ENCODE measurements at regions of chr14 and their contacts with region 1.

Region 1: GRCh38 chr14:59428581-59429012 is 36.6 kb downstream of the GPR135 start:
- DNase-seq: peak; percentile 43
- H3K4me3 ChIP-seq: no peak overlapping the region
- H3K27ac ChIP-seq: peak overlapping the region in 1 of 2 donors; percentile 42
- H3K4me1 ChIP-seq: peaks cover 19% of the 10 kb centered on the region
- H3K27me3 ChIP-seq: no peaks in the 10 kb centered on the region
- CTCF ChIP-seq: peak; percentile 20 to 40 (median 36)
- POLR2A ChIP-seq: no peak

Region 2: GRCh38 chr14:59189786-59190771 is 238.5 kb before region 1 on chr14:
- intact Hi-C with region 1: loop called (anchors 10 kb)
- DNase-seq: peak; percentile 96
- H3K4me3 ChIP-seq: peak overlapping the region; percentile 88 to 92
- H3K27ac ChIP-seq: peak overlapping the region; percentile 96
- H3K4me1 ChIP-seq: peaks cover 24% of the 10 kb centered on the region
- H3K27me3 ChIP-seq: no peaks in the 10 kb centered on the region
- CTCF ChIP-seq: no peak
- POLR2A ChIP-seq: no peak

Region 3: GRCh38 chr14:59301354-59301753 is 127.2 kb before region 1 on chr14:
- intact Hi-C with region 1: no loop called
- DNase-seq: no peak
- H3K4me3 ChIP-seq: no peak overlapping the region
- H3K27ac ChIP-seq: no peak overlapping the region
- H3K4me1 ChIP-seq: peaks cover 7% of the 10 kb centered on the region
- H3K27me3 ChIP-seq: no peaks in the 10 kb centered on the region
- CTCF ChIP-seq: no peak
- POLR2A ChIP-seq: no peak

Measured in testis (tissue), 5 donors.